ENCODE measurements at regions of chr1 and their contacts with region 1.

Region 1: GRCh38 chr1:31644560-31645273 is at the start of gene PEF1:
- DNase-seq: peak; percentile 98
- H3K4me3 Mint-ChIP-seq: peak within 1 kb of the TSS; percentile 96
- H3K27ac Mint-ChIP-seq: peak within 1 kb of the TSS; percentile 100
- H3K4me1 Mint-ChIP-seq: peaks cover 21% of the 10 kb centered on the region
- H3K27me3 Mint-ChIP-seq: peaks cover 2% of the 10 kb centered on the region
- total RNA-seq, gene PEF1: 57.6 and 66.1 TPM in 2 replicates

Region 2: GRCh38 chr1:30756545-30757195 is 888.0 kb before region 1 on chr1:
- intact Hi-C with region 1: loop called (anchors 10 kb)
- DNase-seq: peak; percentile 64
- H3K4me3 Mint-ChIP-seq: peak overlapping the region; percentile 99
- H3K27ac Mint-ChIP-seq: peak overlapping the region; percentile 97
- H3K4me1 Mint-ChIP-seq: peaks cover 99% of the 10 kb centered on the region
- H3K27me3 Mint-ChIP-seq: no peaks in the 10 kb centered on the region

Region 3: GRCh38 chr1:31065310-31066217 is 579.2 kb before region 1 on chr1 and contains the start of gene PUM1:
- intact Hi-C with region 1: loop called (anchors 10 kb)
- DNase-seq: peak; percentile 97
- H3K4me3 Mint-ChIP-seq: peak within 1 kb of the TSS; percentile 99
- H3K27ac Mint-ChIP-seq: peak within 1 kb of the TSS; percentile 98
- H3K4me1 Mint-ChIP-seq: peaks cover 35% of the 10 kb centered on the region
- H3K27me3 Mint-ChIP-seq: no peaks in the 10 kb centered on the region
- total RNA-seq, gene PUM1: 130 and 132 TPM in 2 replicates

Region 4: DNA sequence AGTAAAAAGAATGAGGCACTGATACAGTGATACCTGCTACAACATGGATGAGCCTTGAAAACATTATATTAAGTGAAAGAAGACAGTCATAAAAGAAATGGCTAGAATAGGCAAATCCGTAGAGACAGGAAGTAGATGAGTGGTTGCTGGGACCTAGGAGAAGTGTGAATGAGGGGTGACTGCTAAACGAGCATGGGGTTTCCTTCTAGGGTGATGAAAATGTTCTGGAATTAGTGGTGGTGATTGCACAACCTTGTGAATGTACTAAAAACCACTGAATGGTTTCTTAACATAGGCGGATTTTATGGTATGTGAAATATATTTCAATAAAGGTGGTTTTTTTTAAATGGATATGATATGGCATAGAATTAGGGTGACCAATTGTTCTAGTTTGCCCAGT is 244.3 kb before region 1 on chr1:
- intact Hi-C with region 1: no loop called
- DNase-seq: no peak
- H3K4me3 Mint-ChIP-seq: no peak overlapping the region
- H3K27ac Mint-ChIP-seq: no peak overlapping the region
- H3K4me1 Mint-ChIP-seq: no peaks in the 10 kb centered on the region
- H3K27me3 Mint-ChIP-seq: peaks cover 11% of the 10 kb centered on the region

Region 5: DNA sequence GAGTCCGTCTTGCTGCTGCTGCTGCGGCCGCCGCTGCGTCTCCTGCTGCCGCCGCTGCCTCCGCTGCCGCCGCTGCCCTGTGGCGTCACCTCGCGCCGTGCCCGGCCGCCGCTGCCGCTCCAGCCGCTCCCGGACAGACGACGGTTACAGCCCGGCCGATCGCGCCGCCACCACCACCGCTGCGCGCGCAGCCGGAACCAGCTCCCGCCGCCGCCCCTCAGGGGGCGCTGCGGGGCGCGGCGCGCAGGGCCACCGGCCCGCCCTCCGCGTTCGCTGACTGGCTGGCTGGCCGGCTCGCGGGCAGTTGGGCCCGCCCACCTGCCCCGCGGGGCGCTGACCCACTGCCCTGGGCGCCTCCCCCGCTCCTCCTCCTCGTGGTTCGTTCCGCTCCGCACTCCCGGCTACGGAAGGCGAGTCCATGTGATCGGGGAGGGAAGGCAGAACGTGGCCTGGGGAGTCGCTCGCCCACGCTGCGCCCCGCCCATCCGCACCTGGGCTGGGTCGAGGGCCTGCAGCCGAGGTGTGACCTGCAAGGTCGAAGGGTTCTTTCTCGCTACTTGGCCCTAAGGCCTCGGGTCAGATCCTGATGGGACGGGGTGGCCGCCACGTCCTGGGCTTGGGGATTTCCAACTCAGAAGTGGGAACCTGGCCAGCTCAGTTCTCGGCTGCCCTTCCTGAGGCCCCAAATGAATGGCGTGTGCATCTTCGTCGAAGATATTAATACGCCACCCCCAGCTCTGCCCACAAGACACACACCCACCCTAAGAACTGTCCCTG is 293.6 kb after region 1 on chr1 and contains the start of gene PTP4A2:
- intact Hi-C with region 1: loop called (anchors 10 kb)
- DNase-seq: peak; percentile 88
- H3K4me3 Mint-ChIP-seq: peak within 1 kb of the TSS; percentile 100
- H3K27ac Mint-ChIP-seq: peak within 1 kb of the TSS; percentile 99
- H3K4me1 Mint-ChIP-seq: peaks cover 63% of the 10 kb centered on the region
- H3K27me3 Mint-ChIP-seq: no peaks in the 10 kb centered on the region
- total RNA-seq, gene PTP4A2: 390 and 421 TPM in 2 replicates

Region 6: GRCh38 chr1:32013386-32014198 is 368.9 kb after region 1 on chr1 and contains the start of gene KHDRBS1:
- intact Hi-C with region 1: loop called (anchors 1 kb)
- DNase-seq: peak; percentile 99
- H3K4me3 Mint-ChIP-seq: peak within 1 kb of the TSS; percentile 99
- H3K27ac Mint-ChIP-seq: peak within 1 kb of the TSS; percentile 97
- H3K4me1 Mint-ChIP-seq: peaks cover 31% of the 10 kb centered on the region
- H3K27me3 Mint-ChIP-seq: no peaks in the 10 kb centered on the region
- total RNA-seq, gene KHDRBS1: 156 and 158 TPM in 2 replicates